ENCODE measurements at regions of chr11 and their contacts with region 1.

Region 1: DNA sequence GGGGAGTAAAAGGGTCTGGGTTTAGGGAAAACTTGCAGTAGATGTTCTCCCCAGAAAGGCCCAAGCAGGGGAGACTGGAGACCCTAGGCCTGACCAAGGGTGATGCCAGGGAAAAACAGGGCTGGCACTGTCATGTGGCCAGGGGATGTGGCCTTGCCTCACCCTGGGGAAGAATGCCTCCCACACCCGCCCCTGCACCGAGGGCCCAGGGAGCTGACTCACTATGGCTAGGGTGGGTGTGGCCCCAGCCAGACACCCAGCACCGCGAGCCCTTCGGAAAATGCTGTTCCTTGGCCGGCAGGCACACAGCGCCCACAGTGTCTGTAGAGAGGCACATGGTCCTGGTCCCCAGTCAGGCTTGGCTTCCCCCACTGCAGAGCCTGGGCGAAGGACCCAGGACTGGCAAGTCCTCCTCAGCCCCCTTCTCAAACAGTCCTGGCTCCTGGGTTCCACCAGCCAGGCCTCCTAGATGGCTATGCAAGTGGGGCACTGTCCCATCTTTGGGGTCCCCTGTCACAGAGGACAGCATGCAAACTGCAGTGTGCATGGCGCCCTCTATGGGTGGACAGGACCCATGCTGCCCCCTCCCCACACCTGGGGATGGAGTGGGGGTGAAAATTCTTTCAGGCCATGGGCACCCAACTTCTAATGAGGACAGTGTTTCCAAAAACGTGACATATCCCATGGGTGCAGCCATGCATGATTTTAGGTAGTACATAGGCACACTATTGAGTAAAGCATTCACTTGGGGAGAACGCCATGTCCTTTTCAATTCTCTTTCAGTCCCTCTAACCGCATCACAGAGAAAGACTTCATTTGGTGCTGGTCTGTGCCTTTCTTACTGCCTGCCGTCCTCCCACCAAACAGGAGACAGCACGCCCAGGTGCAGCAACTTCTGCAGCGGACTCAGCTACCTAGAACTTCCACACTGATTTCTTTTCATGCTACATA is 15.2 kb downstream of the TMPRSS5 start:
- DNase-seq: peak; percentile 92 to 93 (median 92)
- ATAC-seq: peak; percentile 98
- H3K4me3 ChIP-seq: no peak overlapping the region
- H3K27ac ChIP-seq: peak overlapping the region; percentile 87
- H3K4me1 ChIP-seq: peaks cover 22 to 38% of the 10 kb centered on the region in 2 experiments
- H3K27me3 ChIP-seq: no peaks in the 10 kb centered on the region
- CTCF ChIP-seq: peak; percentile 72 to 96 (median 76)
- EP300 ChIP-seq: peak; percentile 45; the same call in 1 of the 2 replicates
- POLR2A ChIP-seq: peak; percentile 70
- RAD21 ChIP-seq: peak; percentile 70 to 83

Region 2: GRCh38 chr11:113553915-113554314 is 137.0 kb before region 1 on chr11:
- CTCF ChIA-PET with region 1: no interaction called
- POLR2A ChIA-PET with region 1: no interaction called
- in situ Hi-C with region 1: no loop called
- intact Hi-C with region 1: loop called (anchors 1 kb)
- DNase-seq: peak; percentile 26 to 55 (median 36)
- ATAC-seq: peak; percentile 66
- H3K4me3 ChIP-seq: no peak overlapping the region
- H3K27ac ChIP-seq: no peak overlapping the region
- H3K4me1 ChIP-seq: peaks cover 8 to 40% of the 10 kb centered on the region in 2 experiments; a peak in 4 of 5 replicates
- H3K27me3 ChIP-seq: no peaks in the 10 kb centered on the region
- CTCF ChIP-seq: peak; percentile 34 to 44 (median 43); a peak in 5 of 6 replicates
- EP300 ChIP-seq: no peak
- POLR2A ChIP-seq: no peak
- RAD21 ChIP-seq: peak in 1 of 2 experiments; percentile 63; a peak in 2 of 4 replicates

Region 3: GRCh38 chr11:113587308-113587739 is 103.6 kb before region 1 on chr11:
- CTCF ChIA-PET with region 1: no interaction called
- POLR2A ChIA-PET with region 1: no interaction called
- in situ Hi-C with region 1: no loop called
- intact Hi-C with region 1: loop called (anchors 1 kb)
- DNase-seq: peak in 2 of 4 experiments; percentile 30 to 54
- ATAC-seq: peak; percentile 82
- H3K4me3 ChIP-seq: no peak overlapping the region
- H3K27ac ChIP-seq: no peak overlapping the region
- H3K4me1 ChIP-seq: peaks cover 2 to 8% of the 10 kb centered on the region in 2 experiments; a peak in 4 of 5 replicates
- H3K27me3 ChIP-seq: no peaks in the 10 kb centered on the region
- CTCF ChIP-seq: peak; percentile 43 to 47 (median 44); a peak in 4 of 6 replicates
- EP300 ChIP-seq: 0 out of 2 replicates have a peak, but pooled peaks have one; percentile 16
- POLR2A ChIP-seq: no peak
- RAD21 ChIP-seq: peak; percentile 58 to 80

Region 4: DNA sequence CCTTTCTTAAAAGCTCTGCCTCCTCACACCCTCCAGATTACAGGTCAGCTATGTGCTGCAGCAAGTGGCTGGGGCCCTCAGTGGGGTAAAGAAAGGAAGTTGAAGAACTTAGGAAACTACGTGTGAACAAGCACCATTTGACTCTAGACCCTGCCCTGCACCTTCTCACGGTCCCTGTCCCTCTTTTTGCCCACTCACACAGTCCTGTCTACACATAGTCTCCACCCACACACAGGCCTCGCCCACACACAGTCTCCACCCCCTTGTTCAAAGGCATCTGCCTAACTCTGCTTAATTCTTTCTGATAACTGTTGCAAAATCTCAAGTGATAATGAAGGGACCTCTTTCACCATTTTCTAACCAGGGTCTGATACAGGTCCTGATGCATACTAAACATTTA is 43.8 kb before region 1 on chr11:
- CTCF ChIA-PET with region 1: no interaction called
- POLR2A ChIA-PET with region 1: interaction called, 3 read pairs
- in situ Hi-C with region 1: no loop called
- intact Hi-C with region 1: loop called (anchors 5 kb)
- DNase-seq: peak; percentile 47 to 61 (median 52)
- ATAC-seq: peak; percentile 96
- H3K4me3 ChIP-seq: no peak overlapping the region
- H3K27ac ChIP-seq: no peak overlapping the region
- H3K4me1 ChIP-seq: peaks cover 5 to 17% of the 10 kb centered on the region in 2 experiments; a peak in 4 of 5 replicates
- H3K27me3 ChIP-seq: no peaks in the 10 kb centered on the region
- CTCF ChIP-seq: no peak
- EP300 ChIP-seq: no peak
- POLR2A ChIP-seq: no peak
- RAD21 ChIP-seq: no peak

Region 5: GRCh38 chr11:113664069-113664980 is 26.6 kb before region 1 on chr11:
- CTCF ChIA-PET with region 1: no interaction called
- POLR2A ChIA-PET with region 1: interaction called, 5 read pairs
- in situ Hi-C with region 1: no loop called
- intact Hi-C with region 1: loop called (anchors 2 kb)
- DNase-seq: peak; percentile 49 to 70 (median 56)
- ATAC-seq: peak; percentile 86
- H3K4me3 ChIP-seq: peak overlapping the region; percentile 28
- H3K27ac ChIP-seq: peak overlapping the region; percentile 97
- H3K4me1 ChIP-seq: peaks cover 9 to 44% of the 10 kb centered on the region in 2 experiments; a peak in 4 of 5 replicates
- H3K27me3 ChIP-seq: no peaks in the 10 kb centered on the region
- CTCF ChIP-seq: no peak
- EP300 ChIP-seq: peak; percentile 81
- POLR2A ChIP-seq: no peak
- RAD21 ChIP-seq: no peak

Measured in K562 (cell line).